HEK293 (cell line): ENCODE measurements at regions of chr19 and their contacts with region 1.

Region 1: GRCh38 chr19:3429581-3430080 is 50.7 kb downstream of the SMIM24 start:
- H3K4me3 ChIP-seq: no peak overlapping the region
- H3K27ac ChIP-seq: no peak overlapping the region
- H3K4me1 ChIP-seq: no peaks in the 10 kb centered on the region
- CTCF ChIP-seq: peak; percentile 87

Region 2: GRCh38 chr19:3413796-3414327 is 15.8 kb before region 1 on chr19:
- CTCF ChIA-PET with region 1: interaction called, 12 read pairs
- POLR2A ChIA-PET with region 1: interaction called, 3 read pairs
- H3K4me3 ChIP-seq: no peak overlapping the region
- H3K27ac ChIP-seq: no peak overlapping the region
- H3K4me1 ChIP-seq: no peaks in the 10 kb centered on the region
- CTCF ChIP-seq: no peak